Activated CD4-positive, alpha-beta T cell treated with anti-CD3 and anti-CD28 coated beads, Interleukin-2, amount 10 ng/mL, durations not matched to agents 7 days and 5 days (primary cell): ENCODE measurements at regions of chr1 and their contacts with region 1.

Region 1: DNA sequence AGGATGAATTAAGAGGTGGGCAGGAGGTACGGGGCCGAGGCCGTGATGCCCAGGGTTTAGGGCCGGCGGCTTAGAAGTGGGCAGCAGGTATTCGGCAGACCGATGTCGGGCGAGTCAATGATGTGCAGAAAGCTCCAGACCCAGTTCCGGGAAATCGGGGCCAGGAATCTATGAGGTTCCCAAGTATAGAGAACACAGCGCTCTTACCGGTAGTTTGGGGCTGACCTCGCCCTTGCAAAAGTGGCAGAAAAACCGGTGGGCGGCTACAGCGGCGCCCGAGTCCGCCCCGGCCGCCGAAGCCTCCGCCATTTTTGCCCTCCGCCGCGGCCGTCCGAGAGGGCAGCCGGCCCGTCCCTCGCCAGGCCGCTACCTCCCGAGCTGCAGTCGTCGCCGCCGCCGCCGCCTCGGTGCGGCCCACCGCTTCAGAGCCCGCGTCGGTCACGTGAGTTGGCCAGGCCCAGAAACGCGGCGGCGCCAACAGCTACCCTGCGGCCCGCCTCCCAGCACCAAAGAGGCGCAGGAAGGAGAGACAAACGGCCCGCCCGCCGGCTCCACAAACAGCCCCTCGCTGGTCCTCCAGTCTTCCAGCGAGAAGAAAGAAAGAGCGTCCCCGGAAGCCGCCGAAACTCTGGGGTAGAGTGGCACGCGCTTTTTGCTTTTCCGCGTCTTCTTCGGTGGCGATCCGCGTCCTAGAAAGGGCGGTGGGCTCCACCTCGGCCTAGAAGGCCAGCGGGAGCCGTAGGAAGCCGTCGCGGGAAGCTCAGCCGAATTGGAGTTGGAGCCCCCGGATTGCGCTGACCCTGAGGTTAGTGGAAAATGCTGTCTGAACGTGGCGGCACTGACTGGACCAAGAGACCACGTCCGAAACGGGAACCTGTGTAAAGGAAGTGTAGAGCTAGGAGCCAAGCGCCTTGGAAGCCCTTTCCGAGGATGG is at the starts of genes POLR3C and RNF115:
- DNase-seq: peak; percentile 92
- H3K4me3 Mint-ChIP-seq: peak within 1 kb of the TSS; percentile 96
- H3K27ac Mint-ChIP-seq: peak within 1 kb of the TSS; percentile 95
- H3K4me1 Mint-ChIP-seq: peaks cover 37% of the 10 kb centered on the region
- H3K27me3 Mint-ChIP-seq: no peaks in the 10 kb centered on the region
- total RNA-seq, gene POLR3C: 34.5 to 38.7 TPM
- total RNA-seq, gene RNF115: 14.8 to 15.6 TPM

Region 2: DNA sequence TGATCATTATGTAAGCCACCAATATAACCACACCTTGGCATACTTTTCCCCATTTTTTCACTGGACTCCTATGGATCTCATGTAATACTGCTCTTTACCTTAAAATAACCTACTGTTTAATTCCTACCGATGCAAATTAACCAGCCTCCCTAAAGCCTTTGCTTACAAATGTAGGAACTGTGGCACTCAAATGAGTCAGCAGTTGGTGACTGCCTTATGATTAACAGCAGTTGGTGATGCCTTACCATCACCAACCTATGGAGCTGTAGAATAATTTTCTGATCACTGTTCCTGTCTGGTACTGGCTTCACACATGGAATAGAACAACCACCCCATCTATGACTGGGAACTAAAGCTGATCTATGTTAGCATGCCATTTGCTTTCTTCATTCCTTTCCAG is 13.8 kb after region 1 on chr1:
- CTCF ChIA-PET with region 1: interaction called, 10 read pairs
- POLR2A ChIA-PET with region 1: no interaction called
- DNase-seq: no peak
- H3K4me3 Mint-ChIP-seq: no peak overlapping the region
- H3K27ac Mint-ChIP-seq: no peak overlapping the region
- H3K4me1 Mint-ChIP-seq: no peaks in the 10 kb centered on the region
- H3K27me3 Mint-ChIP-seq: no peaks in the 10 kb centered on the region